Ovary (tissue), 10 donors: ENCODE measurements at regions of chr12 and their contacts with region 1.

Region 1: GRCh38 chr12:55073043-55074022 is 52.9 kb upstream of the OR9K2 start:
- DNase-seq: peak; percentile 46 to 75 (median 66)
- H3K4me3 ChIP-seq: no peak overlapping the region
- H3K27ac ChIP-seq: no peak overlapping the region
- H3K4me1 ChIP-seq: no peaks in the 10 kb centered on the region
- H3K27me3 ChIP-seq: no peaks in the 10 kb centered on the region
- CTCF ChIP-seq: peak; percentile 60 to 65 (median 63)
- EP300 ChIP-seq: no peak
- POLR2A ChIP-seq: no peak

Region 2: GRCh38 chr12:54998958-54999510 is 74.3 kb before region 1 on chr12:
- intact Hi-C with region 1: loop called (anchors 5 kb)
- DNase-seq: no peak
- H3K4me3 ChIP-seq: no peak overlapping the region
- H3K27ac ChIP-seq: no peak overlapping the region
- H3K4me1 ChIP-seq: no peaks in the 10 kb centered on the region
- H3K27me3 ChIP-seq: no peaks in the 10 kb centered on the region
- CTCF ChIP-seq: no peak
- EP300 ChIP-seq: no peak
- POLR2A ChIP-seq: no peak

Region 3: DNA sequence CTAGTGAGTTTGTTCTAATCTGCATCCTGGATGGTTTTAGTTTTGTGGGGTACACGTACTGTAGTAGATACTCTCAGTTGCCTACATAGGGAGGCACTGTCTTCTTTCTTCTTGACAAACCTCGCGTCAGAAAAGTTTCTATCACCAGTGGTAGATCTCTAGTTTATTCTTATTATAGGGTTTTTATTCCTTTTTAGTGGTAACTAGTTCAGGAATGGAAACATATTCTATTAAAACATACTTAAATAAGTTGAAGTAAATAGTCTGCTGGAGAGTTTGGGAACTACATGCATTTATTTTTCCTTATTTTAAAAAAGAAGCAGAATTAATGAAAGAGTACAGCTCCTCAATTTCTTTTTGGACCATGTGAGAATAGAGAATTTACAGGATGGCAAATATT is 19.2 kb after region 1 on chr12:
- intact Hi-C with region 1: no loop called
- DNase-seq: no peak
- H3K4me3 ChIP-seq: no peak overlapping the region
- H3K27ac ChIP-seq: no peak overlapping the region
- H3K4me1 ChIP-seq: no peaks in the 10 kb centered on the region
- H3K27me3 ChIP-seq: no peaks in the 10 kb centered on the region
- CTCF ChIP-seq: no peak
- EP300 ChIP-seq: no peak
- POLR2A ChIP-seq: no peak